ENCODE measurements at regions of chr1 and their contacts with region 1.

Region 1: GRCh38 chr1:153494976-153495535 is 34.6 kb upstream of the S100A7 start:
- DNase-seq: peak; percentile 79
- H3K4me3 ChIP-seq: no peak overlapping the region; a peak in 1 of 4 replicates
- H3K27ac ChIP-seq: no peak overlapping the region
- H3K4me1 ChIP-seq: peaks cover 0 to 5% of the 10 kb centered on the region in 2 experiments; a peak in 1 of 4 replicates
- H3K27me3 ChIP-seq: peaks cover 10% of the 10 kb centered on the region; the same call in 1 of the 2 replicates
- CTCF ChIP-seq: peak; percentile 96
- EP300 ChIP-seq: no peak
- RAD21 ChIP-seq: peak; percentile 88

Region 2: DNA sequence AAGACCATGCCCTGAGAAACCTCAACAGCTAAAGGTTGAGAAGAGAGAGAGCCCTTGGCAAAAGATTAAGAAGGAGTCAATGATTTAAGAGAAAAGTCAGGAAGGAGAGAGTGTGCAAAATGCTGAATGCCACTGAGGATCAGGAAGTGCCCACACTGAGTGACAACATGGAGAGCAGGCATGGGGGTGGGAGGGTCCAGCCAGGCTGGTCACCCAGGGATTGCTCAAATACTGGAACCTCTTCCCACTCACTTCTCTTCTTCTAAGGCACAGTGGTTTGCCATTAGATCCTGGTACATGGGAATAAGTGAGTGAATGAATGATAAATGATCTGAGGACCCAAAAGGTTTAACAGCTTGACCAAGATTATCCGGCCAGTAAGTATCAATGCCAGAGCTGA is 266.6 kb before region 1 on chr1:
- CTCF ChIA-PET with region 1: no interaction called
- POLR2A ChIA-PET with region 1: no interaction called
- DNase-seq: no peak
- H3K4me3 ChIP-seq: no peak overlapping the region
- H3K27ac ChIP-seq: no peak overlapping the region
- H3K4me1 ChIP-seq: no peaks in the 10 kb centered on the region; a peak in 1 of 4 replicates
- H3K27me3 ChIP-seq: peaks cover 16% of the 10 kb centered on the region; the same call in 1 of the 2 replicates
- CTCF ChIP-seq: no peak
- EP300 ChIP-seq: no peak
- RAD21 ChIP-seq: no peak

Region 3: DNA sequence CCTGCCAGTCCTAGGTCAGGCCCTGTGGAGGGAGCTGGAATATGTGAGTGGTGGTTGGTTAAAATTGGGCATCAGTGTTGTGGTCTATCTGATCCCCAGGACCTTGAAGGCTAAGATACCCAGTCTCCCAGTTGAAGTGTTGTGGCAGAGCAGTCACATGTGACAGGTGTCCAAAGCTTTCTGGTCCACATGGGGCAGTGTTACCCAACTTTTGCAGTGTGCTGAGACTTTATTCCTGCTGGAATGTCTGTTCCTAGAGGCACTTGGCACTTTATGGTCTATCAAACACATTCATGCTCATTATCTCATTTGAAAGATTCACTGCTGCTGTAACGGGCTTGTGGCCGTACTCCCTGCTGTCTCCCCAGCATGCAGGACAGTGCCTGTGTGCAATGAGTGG is 256.5 kb before region 1 on chr1:
- CTCF ChIA-PET with region 1: no interaction called
- POLR2A ChIA-PET with region 1: no interaction called
- DNase-seq: no peak
- H3K4me3 ChIP-seq: no peak overlapping the region
- H3K27ac ChIP-seq: no peak overlapping the region
- H3K4me1 ChIP-seq: no peaks in the 10 kb centered on the region
- H3K27me3 ChIP-seq: no peaks in the 10 kb centered on the region
- CTCF ChIP-seq: no peak; the same call in 1 of the 2 replicates
- EP300 ChIP-seq: no peak
- RAD21 ChIP-seq: no peak

Region 4: DNA sequence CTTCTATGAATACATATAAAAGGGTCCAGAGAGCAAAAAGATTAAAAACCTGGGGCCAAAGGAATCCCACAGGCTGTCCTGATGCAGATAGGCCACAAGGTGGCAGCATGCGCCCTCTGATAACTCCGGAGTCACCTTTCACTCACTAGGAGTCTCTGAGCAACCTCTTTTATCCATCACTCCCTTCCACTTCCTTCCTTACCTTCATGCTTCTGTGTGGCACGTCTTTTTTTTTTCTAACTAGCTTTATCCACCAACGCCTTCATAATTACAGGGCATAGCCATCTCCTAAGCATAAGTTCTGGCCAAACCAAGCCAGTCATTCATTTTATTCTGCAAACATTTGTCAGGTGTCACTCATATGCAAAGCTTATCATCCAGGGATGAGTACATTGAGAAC is 142.5 kb before region 1 on chr1:
- CTCF ChIA-PET with region 1: interaction called, 336 read pairs
- POLR2A ChIA-PET with region 1: no interaction called
- DNase-seq: peak; percentile 77
- H3K4me3 ChIP-seq: no peak overlapping the region; a peak in 1 of 4 replicates
- H3K27ac ChIP-seq: no peak overlapping the region
- H3K4me1 ChIP-seq: no peaks in the 10 kb centered on the region
- H3K27me3 ChIP-seq: peaks cover 64% of the 10 kb centered on the region; the same call in 1 of the 2 replicates
- CTCF ChIP-seq: peak; percentile 93
- EP300 ChIP-seq: no peak
- RAD21 ChIP-seq: peak; percentile 92

Region 5: DNA sequence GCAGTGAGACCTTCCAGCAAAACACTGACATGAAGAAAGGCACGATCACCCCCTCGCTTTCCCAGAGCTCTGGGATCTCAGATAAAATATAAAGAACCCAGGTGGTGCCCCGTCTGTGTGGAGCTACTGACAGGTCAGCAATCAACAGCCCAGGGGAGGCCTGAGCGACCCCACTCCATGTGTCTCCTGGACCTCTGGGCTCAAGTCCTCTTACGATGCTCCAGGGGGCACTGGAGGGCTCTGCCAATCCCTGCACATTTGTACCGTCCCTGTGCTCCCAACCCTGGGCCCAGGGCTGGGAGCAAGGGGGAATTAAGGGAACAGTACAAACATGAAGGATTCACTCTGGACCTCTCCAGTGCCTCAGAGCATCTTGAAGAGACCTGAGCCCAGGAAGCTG is 66.3 kb before region 1 on chr1:
- CTCF ChIA-PET with region 1: interaction called, 10 read pairs
- POLR2A ChIA-PET with region 1: no interaction called
- DNase-seq: no peak
- H3K4me3 ChIP-seq: no peak overlapping the region
- H3K27ac ChIP-seq: no peak overlapping the region
- H3K4me1 ChIP-seq: no peaks in the 10 kb centered on the region
- H3K27me3 ChIP-seq: peaks cover 12% of the 10 kb centered on the region; the same call in 1 of the 2 replicates
- CTCF ChIP-seq: peak; percentile 11; the same call in 1 of the 2 replicates
- EP300 ChIP-seq: no peak
- RAD21 ChIP-seq: no peak

Region 6: DNA sequence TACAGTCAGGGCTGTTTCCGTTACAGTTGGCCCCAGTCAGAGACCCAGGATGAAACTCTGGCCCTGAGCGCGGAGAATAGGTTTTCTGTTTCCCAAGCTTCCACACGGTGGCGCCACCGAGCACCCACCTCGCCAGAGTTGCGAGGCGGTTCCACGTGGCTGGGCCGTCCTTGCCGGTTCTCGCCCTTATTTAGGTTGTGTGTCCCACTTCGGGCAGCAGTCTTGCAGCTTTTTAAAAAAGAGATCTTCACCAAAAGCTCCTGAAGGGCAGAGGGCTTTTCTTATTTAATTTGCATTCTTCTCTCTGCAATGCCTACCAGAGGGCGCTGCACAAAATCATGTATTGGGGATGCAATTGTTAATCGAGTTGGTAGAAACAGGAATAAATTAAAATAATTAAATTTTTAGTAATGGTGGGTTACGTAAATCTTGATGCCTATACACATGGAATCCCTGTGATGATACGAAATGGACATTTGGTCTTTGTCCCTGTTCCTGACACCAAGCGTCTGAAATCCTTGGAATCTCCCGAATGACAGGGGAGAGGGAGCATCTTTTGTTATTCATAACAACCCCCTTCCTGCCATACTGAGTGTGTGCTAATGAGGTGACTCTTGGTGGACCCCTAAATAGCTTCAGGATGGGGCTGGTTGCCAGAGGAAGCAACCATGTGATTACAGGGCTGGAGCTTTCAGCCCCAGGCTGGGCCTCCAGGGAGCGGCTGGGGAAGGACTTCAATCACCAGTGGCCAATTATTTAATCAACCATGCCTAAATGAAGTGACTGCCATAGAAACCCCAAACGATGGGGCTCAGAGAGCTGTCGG is 29.0 kb before region 1 on chr1:
- CTCF ChIA-PET with region 1: interaction called, 79 read pairs
- POLR2A ChIA-PET with region 1: no interaction called
- DNase-seq: peak; percentile 76
- H3K4me3 ChIP-seq: peak overlapping the region in 1 of 2 experiments; percentile 50; a peak in 1 of 4 replicates
- H3K27ac ChIP-seq: no peak overlapping the region
- H3K4me1 ChIP-seq: peaks cover 2 to 4% of the 10 kb centered on the region in 2 experiments; a peak in 1 of 4 replicates
- H3K27me3 ChIP-seq: no peaks in the 10 kb centered on the region; the same call in 1 of the 2 replicates
- CTCF ChIP-seq: peak; percentile 83
- EP300 ChIP-seq: no peak
- RAD21 ChIP-seq: peak; percentile 56